Activated naive CD4-positive, alpha-beta T cell treated with anti-CD3 and anti-CD28 coated beads for 36 hours (primary cell): ENCODE measurements at regions of chr5 and their contacts with region 1.

Region 1: DNA sequence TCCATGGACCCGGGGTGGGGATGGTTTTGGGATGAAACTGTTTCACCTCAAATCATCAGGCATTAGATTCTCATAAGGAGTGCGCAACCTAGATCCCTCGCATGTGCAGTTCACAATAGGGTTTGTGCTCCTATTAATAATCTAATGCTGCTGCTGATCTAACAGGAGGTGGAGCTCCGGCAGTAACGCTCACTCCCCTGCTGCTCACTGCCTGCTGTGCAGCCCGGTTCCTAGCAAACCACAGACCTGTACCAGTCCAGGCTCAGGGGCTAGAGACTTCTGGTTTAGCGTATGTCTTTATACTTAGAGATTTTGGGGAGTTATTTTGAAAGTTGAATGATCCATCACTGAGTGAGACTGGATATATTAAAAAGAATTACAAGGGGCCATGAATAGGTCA is 50.2 kb downstream of the RICTOR start:
- DNase-seq: peak; percentile 22
- H3K4me3 Mint-ChIP-seq: no peak overlapping the region
- H3K27ac Mint-ChIP-seq: no peak overlapping the region
- H3K4me1 Mint-ChIP-seq: peaks cover 59% of the 10 kb centered on the region
- H3K27me3 Mint-ChIP-seq: no peaks in the 10 kb centered on the region

Region 2: DNA sequence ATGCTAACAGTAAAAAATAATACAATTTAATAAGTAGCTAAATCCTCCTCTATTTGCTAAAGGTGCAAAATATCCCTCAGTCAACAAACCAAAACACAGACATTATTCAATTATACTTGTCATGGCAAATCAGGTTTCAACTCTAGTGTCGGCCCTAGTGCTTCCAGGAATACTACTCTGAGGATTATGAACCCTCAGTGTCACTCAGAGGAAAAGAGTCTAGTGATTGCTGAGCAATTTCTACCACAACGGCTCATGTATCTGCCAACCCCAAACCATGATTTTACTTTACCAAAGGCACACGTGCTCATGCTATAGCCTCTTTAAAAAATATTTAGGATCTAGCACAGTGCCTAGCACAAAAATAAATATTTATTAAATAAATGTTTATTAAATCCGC is 29.2 kb after region 1 on chr5:
- CTCF ChIA-PET with region 1: no interaction called
- intact Hi-C with region 1: loop called (anchors 2 kb)
- DNase-seq: no peak
- H3K4me3 Mint-ChIP-seq: no peak overlapping the region
- H3K27ac Mint-ChIP-seq: no peak overlapping the region
- H3K4me1 Mint-ChIP-seq: peaks cover 40% of the 10 kb centered on the region
- H3K27me3 Mint-ChIP-seq: no peaks in the 10 kb centered on the region